T-cell (primary cell): ENCODE measurements at regions of chr5 and their contacts with region 1.

Region 1: GRCh38 chr5:122774861-122775549 is at the start of gene SNX2:
- DNase-seq: peak; percentile 69 to 93 (median 84)
- ATAC-seq: peak; percentile 89 to 92 (median 92)
- H3K4me3 ChIP-seq: peak within 1 kb of the TSS; percentile 59 to 92
- H3K4me3 Mint-ChIP-seq: peak within 1 kb of the TSS; percentile 93 to 98 (median 94)
- H3K27ac ChIP-seq: peak within 1 kb of the TSS; percentile 89
- H3K27ac Mint-ChIP-seq: peak within 1 kb of the TSS; percentile 89
- H3K4me1 ChIP-seq: peaks cover 7 to 15% of the 10 kb centered on the region in 2 experiments
- H3K4me1 Mint-ChIP-seq: peaks cover 45 to 51% (median 46%) of the 10 kb centered on the region in 3 donors
- H3K27me3 ChIP-seq: no peaks in the 10 kb centered on the region
- H3K27me3 Mint-ChIP-seq: peaks cover 0 to 4% of the 10 kb centered on the region in 2 donors
- total RNA-seq, gene SNX2: 41.8 to 56.3 (median 47.8) TPM

Region 2: DNA sequence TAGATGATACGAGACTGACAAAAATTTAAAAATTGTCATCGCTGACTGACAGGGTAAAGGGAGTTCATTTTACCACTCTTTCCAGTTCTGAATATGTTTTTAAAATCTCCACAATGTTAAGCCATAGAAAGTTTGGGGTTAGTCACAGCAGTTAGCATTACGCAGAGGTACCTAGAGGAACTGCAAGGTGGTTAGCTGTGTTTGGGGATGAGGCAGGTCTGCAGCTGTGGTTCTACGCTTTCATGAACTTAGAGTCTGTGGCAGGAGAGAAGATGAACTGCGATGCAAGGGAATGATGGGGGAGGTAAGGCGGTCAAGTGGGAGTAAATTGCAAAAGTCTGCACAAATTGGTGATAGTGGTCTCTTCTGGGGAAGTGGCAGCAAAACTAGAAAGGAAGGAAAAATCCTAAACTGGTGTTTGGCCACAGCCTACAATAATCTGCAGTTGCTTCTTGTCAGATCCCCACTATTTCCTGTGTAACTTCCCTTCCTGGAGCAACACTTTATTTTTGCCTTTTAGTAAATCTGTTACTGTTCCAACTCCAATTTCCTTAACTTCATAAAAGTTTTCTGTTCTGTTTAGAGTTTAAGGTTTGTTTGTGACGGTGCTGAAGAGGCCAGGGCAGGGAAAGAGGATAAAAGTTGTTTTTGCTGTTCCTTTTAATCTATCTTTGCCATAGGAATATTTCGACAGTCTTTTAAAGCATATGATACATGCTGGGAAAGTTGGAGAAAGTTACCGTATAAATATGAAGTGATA is 38.7 kb before region 1 on chr5:
- CTCF ChIA-PET with region 1: no interaction called
- POLR2A ChIA-PET with region 1: no interaction called
- DNase-seq: no peak
- ATAC-seq: no peak
- H3K4me3 ChIP-seq: no peak overlapping the region
- H3K4me3 Mint-ChIP-seq: no peak overlapping the region
- H3K27ac ChIP-seq: no peak overlapping the region
- H3K27ac Mint-ChIP-seq: no peak overlapping the region
- H3K4me1 ChIP-seq: no peaks in the 10 kb centered on the region
- H3K4me1 Mint-ChIP-seq: no peaks in the 10 kb centered on the region
- H3K27me3 ChIP-seq: peaks cover 0 to 7% of the 10 kb centered on the region in 2 experiments
- H3K27me3 Mint-ChIP-seq: peaks cover 19 to 20% of the 10 kb centered on the region in 2 donors

Region 3: GRCh38 chr5:122845229-122846050 is 70.4 kb after region 1 on chr5 and contains the start of gene SNX24:
- CTCF ChIA-PET with region 1: interaction called, 3 to 10 read pairs
- POLR2A ChIA-PET with region 1: no interaction called
- DNase-seq: peak; percentile 33 to 80 (median 62)
- ATAC-seq: peak; percentile 85 to 88 (median 87)
- H3K4me3 ChIP-seq: peak within 1 kb of the TSS; percentile 66 to 96
- H3K4me3 Mint-ChIP-seq: peak within 1 kb of the TSS; percentile 83 to 86 (median 86)
- H3K27ac ChIP-seq: peak within 1 kb of the TSS; percentile 70
- H3K27ac Mint-ChIP-seq: peak within 1 kb of the TSS; percentile 91
- H3K4me1 ChIP-seq: peaks cover 8 to 19% of the 10 kb centered on the region in 2 experiments
- H3K4me1 Mint-ChIP-seq: peaks cover 26 to 39% (median 27%) of the 10 kb centered on the region in 3 donors
- H3K27me3 ChIP-seq: no peaks in the 10 kb centered on the region
- H3K27me3 Mint-ChIP-seq: peaks cover 0 to 3% of the 10 kb centered on the region in 2 donors
- total RNA-seq, gene SNX24: 2.2 to 4.9 (median 3.8) TPM